ENCODE measurements at regions of chr3 and their contacts with region 1.

Region 1: DNA sequence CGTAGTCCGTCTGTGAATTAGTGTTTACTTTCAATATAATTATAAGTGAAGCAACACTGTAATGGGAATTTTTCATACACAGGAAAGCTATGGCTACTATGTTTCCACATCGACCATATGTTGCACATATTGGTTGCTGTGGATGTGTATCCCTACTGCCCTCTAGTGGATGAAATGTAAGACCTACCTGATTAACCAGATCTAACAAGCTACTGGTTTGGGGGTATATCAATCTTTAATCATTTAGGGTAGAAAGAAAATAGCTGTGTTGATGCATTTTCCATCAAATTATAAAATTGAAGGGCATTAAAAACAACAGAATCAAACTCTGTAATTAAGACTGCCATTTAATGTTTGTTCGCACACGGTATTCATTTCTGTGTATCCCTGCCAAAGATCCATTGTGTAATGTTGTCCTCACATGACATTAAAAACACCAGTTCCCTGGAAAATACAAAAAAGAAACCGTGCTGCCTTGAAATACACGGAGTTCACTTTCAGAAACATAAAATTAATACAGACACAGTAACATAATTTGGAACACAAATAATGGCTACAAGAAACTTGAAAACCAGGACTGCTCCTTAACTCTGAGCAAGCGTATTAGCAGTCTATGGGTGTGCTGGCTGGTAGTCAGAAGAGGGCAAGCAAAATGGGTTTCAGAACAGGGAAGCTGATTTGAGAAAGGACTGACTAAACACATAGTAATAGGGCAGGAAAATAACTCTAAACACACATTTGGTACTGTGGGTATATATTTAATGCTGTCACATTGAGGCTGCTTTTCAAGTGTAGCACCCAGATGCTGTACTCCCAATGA is 125.1 kb downstream of the TIGIT start:
- DNase-seq: no peak
- ATAC-seq: peak; percentile 90
- H3K4me3 Mint-ChIP-seq: no peak overlapping the region
- H3K27ac Mint-ChIP-seq: no peak overlapping the region
- H3K4me1 Mint-ChIP-seq: peaks cover 12% of the 10 kb centered on the region
- H3K27me3 Mint-ChIP-seq: no peaks in the 10 kb centered on the region
- CTCF ChIP-seq: peak; percentile 69

Region 2: DNA sequence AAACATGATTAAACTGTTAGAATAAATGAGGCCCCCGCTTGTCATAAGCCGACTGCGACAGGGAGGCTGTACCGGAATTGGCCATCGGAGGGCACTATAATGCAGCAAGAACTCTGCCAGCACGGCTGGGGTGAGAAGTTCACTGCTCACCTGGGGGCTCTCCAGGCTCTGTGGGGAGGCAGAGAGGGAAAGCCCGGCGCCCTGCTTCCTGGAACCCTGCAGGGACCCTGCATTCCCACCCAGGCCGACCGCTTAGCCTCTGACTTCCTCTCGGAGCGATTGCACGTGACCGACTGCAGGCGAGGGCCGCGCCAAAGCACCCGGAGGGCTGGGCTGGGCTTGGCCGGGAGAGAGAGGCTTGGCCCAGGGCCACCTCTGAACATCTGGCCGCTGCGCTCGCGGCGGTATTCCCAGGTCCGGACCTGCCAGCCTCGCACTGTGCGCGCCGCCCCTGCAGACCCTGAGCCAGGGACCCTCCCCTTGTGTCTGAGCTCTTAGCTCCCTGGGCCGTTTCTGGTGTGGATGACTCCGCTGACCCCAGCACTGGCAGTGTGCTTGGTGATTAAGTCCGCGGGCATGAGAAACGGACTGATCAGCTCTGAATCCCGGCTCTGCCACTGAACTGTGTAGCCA is 266.3 kb before region 1 on chr3:
- CTCF ChIA-PET with region 1: interaction called, 15 read pairs
- POLR2A ChIA-PET with region 1: no interaction called
- DNase-seq: peak; percentile 90
- ATAC-seq: peak; percentile 65
- H3K4me3 Mint-ChIP-seq: peak overlapping the region; percentile 52
- H3K27ac Mint-ChIP-seq: no peak overlapping the region
- H3K4me1 Mint-ChIP-seq: peaks cover 73% of the 10 kb centered on the region
- H3K27me3 Mint-ChIP-seq: peaks cover 3% of the 10 kb centered on the region; the same call in 1 of the 2 replicates
- CTCF ChIP-seq: peak; percentile 65

Region 3: GRCh38 chr3:114213627-114214541 is 205.1 kb before region 1 on chr3:
- CTCF ChIA-PET with region 1: no interaction called
- POLR2A ChIA-PET with region 1: no interaction called
- DNase-seq: no peak
- ATAC-seq: peak; percentile 68
- H3K4me3 Mint-ChIP-seq: no peak overlapping the region
- H3K27ac Mint-ChIP-seq: 0 out of 2 replicates have a peak overlapping the region, but pooled peaks have one; percentile 14
- H3K4me1 Mint-ChIP-seq: peaks cover 3% of the 10 kb centered on the region
- H3K27me3 Mint-ChIP-seq: peaks cover 2% of the 10 kb centered on the region
- CTCF ChIP-seq: no peak

Region 4: GRCh38 chr3:114383875-114384557 is 34.9 kb before region 1 on chr3:
- CTCF ChIA-PET with region 1: interaction called, 46 read pairs
- POLR2A ChIA-PET with region 1: no interaction called
- DNase-seq: peak; percentile 77
- ATAC-seq: peak; percentile 95
- H3K4me3 Mint-ChIP-seq: no peak overlapping the region
- H3K27ac Mint-ChIP-seq: no peak overlapping the region
- H3K4me1 Mint-ChIP-seq: peaks cover 7% of the 10 kb centered on the region
- H3K27me3 Mint-ChIP-seq: no peaks in the 10 kb centered on the region
- CTCF ChIP-seq: peak; percentile 76

Region 5: DNA sequence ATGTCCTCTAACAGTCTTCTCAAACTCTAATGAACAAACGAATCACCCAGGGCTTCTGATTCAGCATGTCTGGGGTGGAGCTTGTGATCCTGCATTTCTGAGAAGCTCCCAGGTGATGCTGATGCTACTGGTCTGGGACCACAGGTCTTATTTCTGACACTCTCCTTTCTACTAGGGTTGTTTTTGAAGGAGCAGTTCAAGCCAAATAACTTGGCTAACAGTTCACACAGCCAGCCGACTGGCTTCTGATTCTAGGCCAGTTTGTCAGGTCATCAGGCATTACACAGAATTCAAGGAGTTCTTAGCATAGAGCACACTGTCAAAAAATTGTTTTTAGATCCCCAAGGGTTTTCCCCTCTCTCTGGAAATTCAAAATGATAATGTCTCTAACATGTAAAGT is 24.4 kb before region 1 on chr3:
- CTCF ChIA-PET with region 1: interaction called, 16 read pairs
- POLR2A ChIA-PET with region 1: no interaction called
- DNase-seq: no peak
- ATAC-seq: no peak
- H3K4me3 Mint-ChIP-seq: no peak overlapping the region
- H3K27ac Mint-ChIP-seq: no peak overlapping the region
- H3K4me1 Mint-ChIP-seq: no peaks in the 10 kb centered on the region
- H3K27me3 Mint-ChIP-seq: no peaks in the 10 kb centered on the region
- CTCF ChIP-seq: no peak

Region 6: DNA sequence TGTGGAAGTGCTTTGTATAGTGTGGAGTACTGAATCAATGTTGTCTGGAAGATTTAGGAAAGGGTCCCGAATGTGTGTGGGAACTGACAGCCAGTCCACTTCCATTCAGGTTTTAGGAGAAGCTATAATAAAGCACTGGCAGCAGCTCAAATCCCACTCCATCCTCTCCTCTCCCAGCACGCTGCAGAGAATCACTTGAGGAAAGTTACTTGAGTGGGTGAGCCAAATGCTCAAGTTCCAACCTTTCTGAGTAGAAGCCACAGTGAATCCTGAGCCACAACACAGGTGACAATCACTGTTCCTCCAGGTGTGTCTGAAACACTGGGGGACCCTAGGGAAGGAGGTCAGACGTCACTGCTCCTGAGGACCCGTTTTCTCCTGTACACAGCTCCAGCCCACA is 18.6 kb before region 1 on chr3:
- CTCF ChIA-PET with region 1: interaction called, 18 read pairs
- POLR2A ChIA-PET with region 1: no interaction called
- DNase-seq: no peak
- ATAC-seq: no peak
- H3K4me3 Mint-ChIP-seq: no peak overlapping the region
- H3K27ac Mint-ChIP-seq: no peak overlapping the region
- H3K4me1 Mint-ChIP-seq: 0 out of 2 replicates have a peak, but pooled peaks cover 6% of the 10 kb centered on the region
- H3K27me3 Mint-ChIP-seq: no peaks in the 10 kb centered on the region
- CTCF ChIP-seq: no peak

Measured in WTC11 (cell line).